ENCODE measurements at regions of chr3 and their contacts with region 1.

Region 1: DNA sequence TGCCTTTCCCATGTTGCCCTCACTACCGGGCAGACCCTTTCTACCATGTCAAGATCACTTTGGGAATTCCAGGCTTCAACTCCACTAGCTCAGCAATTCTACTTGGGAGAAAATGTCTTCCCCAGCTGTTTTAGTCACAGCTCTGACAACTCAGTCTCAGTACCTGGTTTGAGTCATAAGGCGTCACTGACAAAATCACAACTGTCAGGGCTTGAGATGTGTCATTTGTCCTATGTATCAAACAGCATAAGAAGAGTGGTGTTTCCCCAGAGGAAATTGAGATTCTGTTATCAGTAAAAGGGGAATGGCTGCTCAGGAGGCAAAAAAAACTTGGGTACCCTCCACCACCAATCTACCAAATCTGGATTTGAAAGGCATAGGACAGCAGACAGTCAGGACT is 594.9 kb upstream of the SUCLG2 start:
- DNase-seq: peak; percentile 44
- H3K4me3 Mint-ChIP-seq: no peak overlapping the region
- H3K27ac Mint-ChIP-seq: no peak overlapping the region
- H3K4me1 Mint-ChIP-seq: peaks cover 4% of the 10 kb centered on the region
- H3K27me3 Mint-ChIP-seq: no peaks in the 10 kb centered on the region

Region 2: GRCh38 chr3:67357610-67358458 is 891.4 kb before region 1 on chr3:
- CTCF ChIA-PET with region 1: no interaction called
- POLR2A ChIA-PET with region 1: no interaction called
- intact Hi-C with region 1: loop called (anchors 5 kb)
- DNase-seq: no peak
- H3K4me3 Mint-ChIP-seq: no peak overlapping the region
- H3K27ac Mint-ChIP-seq: no peak overlapping the region
- H3K4me1 Mint-ChIP-seq: peaks cover 23% of the 10 kb centered on the region
- H3K27me3 Mint-ChIP-seq: peaks cover 1% of the 10 kb centered on the region

Region 3: GRCh38 chr3:68057637-68058320 is 191.5 kb before region 1 on chr3:
- CTCF ChIA-PET with region 1: no interaction called
- POLR2A ChIA-PET with region 1: no interaction called
- intact Hi-C with region 1: loop called (anchors 1 kb)
- DNase-seq: peak; percentile 78
- H3K4me3 Mint-ChIP-seq: peak overlapping the region; percentile 50
- H3K27ac Mint-ChIP-seq: peak overlapping the region; percentile 67
- H3K4me1 Mint-ChIP-seq: peaks cover 64% of the 10 kb centered on the region
- H3K27me3 Mint-ChIP-seq: no peaks in the 10 kb centered on the region

Region 4: DNA sequence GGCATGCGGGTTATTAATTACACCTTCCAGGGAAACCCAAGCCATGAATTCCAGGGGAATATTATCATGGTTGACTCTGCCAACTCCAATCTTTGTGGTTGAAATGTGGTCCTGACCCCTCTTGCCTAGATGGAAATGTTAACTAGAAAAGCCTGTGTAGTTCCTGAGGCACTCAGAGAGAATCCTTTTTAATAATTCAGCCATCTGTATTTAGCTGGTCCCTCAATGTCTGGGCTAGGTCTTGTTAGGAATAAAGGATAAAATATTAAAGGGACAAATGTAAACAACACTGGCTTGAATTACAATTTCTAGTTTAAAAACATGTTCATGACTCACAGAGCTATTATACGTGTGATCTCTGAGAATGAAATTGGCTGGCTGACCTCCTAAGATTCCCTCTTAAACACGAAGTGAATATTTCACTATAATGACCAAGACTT is 159.7 kb before region 1 on chr3:
- CTCF ChIA-PET with region 1: no interaction called
- POLR2A ChIA-PET with region 1: no interaction called
- intact Hi-C with region 1: loop called (anchors 5 kb)
- DNase-seq: no peak
- H3K4me3 Mint-ChIP-seq: no peak overlapping the region
- H3K27ac Mint-ChIP-seq: no peak overlapping the region
- H3K4me1 Mint-ChIP-seq: peaks cover 63% of the 10 kb centered on the region
- H3K27me3 Mint-ChIP-seq: no peaks in the 10 kb centered on the region

Region 5: GRCh38 chr3:68274286-68274685 is 25.0 kb after region 1 on chr3:
- CTCF ChIA-PET with region 1: no interaction called
- POLR2A ChIA-PET with region 1: no interaction called
- intact Hi-C with region 1: no loop called
- DNase-seq: no peak
- H3K4me3 Mint-ChIP-seq: no peak overlapping the region
- H3K27ac Mint-ChIP-seq: no peak overlapping the region
- H3K4me1 Mint-ChIP-seq: no peaks in the 10 kb centered on the region
- H3K27me3 Mint-ChIP-seq: no peaks in the 10 kb centered on the region